PC-3 (cell line): ENCODE measurements at regions of chr14 and their contacts with region 1.

Region 1: DNA sequence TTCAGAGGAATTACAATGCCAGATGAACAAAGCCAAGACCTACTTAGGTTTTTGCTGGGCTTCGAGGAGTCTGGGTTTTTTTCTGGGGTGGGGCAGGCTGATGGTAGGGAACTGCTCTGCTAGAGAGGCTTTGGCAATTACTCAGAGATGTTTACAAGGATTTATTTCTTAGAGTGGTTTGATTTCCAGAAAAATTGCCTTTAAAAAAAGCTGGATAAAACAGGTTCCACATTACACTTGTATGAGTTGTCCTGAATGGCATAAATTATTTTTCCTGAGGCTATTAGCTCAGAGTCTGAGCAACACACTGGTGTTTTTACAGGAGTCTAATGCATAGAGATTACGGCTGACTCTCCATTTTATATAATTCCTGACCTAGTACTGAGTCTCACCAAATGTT is 118.5 kb upstream of the FRMD6 start:
- DNase-seq: peak; percentile 99
- ATAC-seq: peak; percentile 80
- H3K4me3 ChIP-seq: no peak overlapping the region
- H3K27ac ChIP-seq: peak overlapping the region; percentile 96
- H3K4me1 ChIP-seq: peaks cover 31% of the 10 kb centered on the region
- H3K27me3 ChIP-seq: no peaks in the 10 kb centered on the region
- CTCF ChIP-seq: no peak

Region 2: DNA sequence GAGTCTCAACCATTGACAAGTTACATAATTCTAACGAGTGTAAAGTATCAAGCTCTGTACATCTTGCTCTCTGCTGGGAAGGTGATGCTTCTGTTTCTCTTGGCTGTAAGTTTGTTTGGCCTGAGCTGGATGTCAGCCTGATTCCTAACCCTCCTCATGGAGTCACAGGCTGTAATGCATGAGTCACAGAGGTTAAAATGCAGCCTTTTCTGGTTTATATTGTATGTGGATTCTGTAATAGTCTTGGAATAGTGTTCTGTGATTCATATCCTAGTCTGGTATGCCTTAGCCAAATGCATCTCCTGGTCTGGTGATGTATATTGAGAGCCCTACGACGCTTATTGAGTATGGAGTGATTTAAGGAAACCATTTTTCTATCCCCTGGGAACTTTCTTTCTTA is 14.1 kb after region 1 on chr14:
- CTCF ChIA-PET with region 1: interaction called, 3 read pairs
- POLR2A ChIA-PET with region 1: interaction called, 8 read pairs
- intact Hi-C with region 1: loop called (anchors 1 kb)
- DNase-seq: peak; percentile 99
- ATAC-seq: peak; percentile 93
- H3K4me3 ChIP-seq: peak overlapping the region; percentile 9; the same call in 1 of the 2 replicates
- H3K27ac ChIP-seq: peak overlapping the region; percentile 91
- H3K4me1 ChIP-seq: peaks cover 54% of the 10 kb centered on the region
- H3K27me3 ChIP-seq: no peaks in the 10 kb centered on the region
- CTCF ChIP-seq: no peak

Region 3: DNA sequence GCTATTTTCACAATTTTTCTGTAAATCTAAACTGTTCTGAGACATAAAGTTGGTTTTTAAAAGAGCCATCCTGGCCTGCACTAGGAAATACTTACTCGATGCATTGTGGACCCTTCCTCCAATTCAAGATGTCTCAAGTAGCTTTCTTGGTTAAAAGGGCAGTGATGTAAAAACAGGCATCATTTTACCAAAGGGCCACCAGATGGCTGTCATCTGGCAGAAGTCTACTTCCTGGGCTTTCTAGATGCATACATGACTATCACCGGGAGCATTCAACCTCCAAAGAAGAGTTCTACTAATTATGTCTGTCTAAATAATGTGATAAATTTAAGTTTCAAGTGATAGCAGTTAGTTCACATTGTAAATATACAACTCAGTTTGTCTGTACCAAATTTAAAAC is 21.8 kb after region 1 on chr14:
- CTCF ChIA-PET with region 1: no interaction called
- POLR2A ChIA-PET with region 1: interaction called, 6 read pairs
- intact Hi-C with region 1: loop called (anchors 1 kb)
- DNase-seq: peak; percentile 67
- ATAC-seq: peak; percentile 50
- H3K4me3 ChIP-seq: peak overlapping the region; percentile 47
- H3K27ac ChIP-seq: peak overlapping the region; percentile 72
- H3K4me1 ChIP-seq: peaks cover 47% of the 10 kb centered on the region
- H3K27me3 ChIP-seq: no peaks in the 10 kb centered on the region
- CTCF ChIP-seq: peak; percentile 67

Region 4: GRCh38 chr14:51950007-51950406 is 416.8 kb after region 1 on chr14:
- CTCF ChIA-PET with region 1: no interaction called
- POLR2A ChIA-PET with region 1: no interaction called
- intact Hi-C with region 1: no loop called
- DNase-seq: no peak
- ATAC-seq: no peak
- H3K4me3 ChIP-seq: no peak overlapping the region
- H3K27ac ChIP-seq: no peak overlapping the region
- H3K4me1 ChIP-seq: no peaks in the 10 kb centered on the region
- H3K27me3 ChIP-seq: no peaks in the 10 kb centered on the region
- CTCF ChIP-seq: no peak